ENCODE measurements at regions of chr14 and their contacts with region 1.

Region 1: GRCh38 chr14:104820669-104821228 is 19.8 kb downstream of the ZBTB42 start:
- DNase-seq: peak in 5 of 7 donors; percentile 43 to 80 (median 62)
- H3K4me3 ChIP-seq: no peak overlapping the region
- H3K27ac ChIP-seq: no peak overlapping the region
- H3K4me1 ChIP-seq: peaks cover 10 to 12% of the 10 kb centered on the region in 2 donors
- H3K27me3 ChIP-seq: no peaks in the 10 kb centered on the region
- CTCF ChIP-seq: peak; percentile 7 to 56 (median 31)
- POLR2A ChIP-seq: no peak

Region 2: GRCh38 chr14:104770851-104771272 is 49.9 kb before region 1 on chr14:
- intact Hi-C with region 1: loop called (anchors 5 kb)
- DNase-seq: no peak
- H3K4me3 ChIP-seq: no peak overlapping the region
- H3K27ac ChIP-seq: no peak overlapping the region
- H3K4me1 ChIP-seq: peaks cover 0 to 4% of the 10 kb centered on the region in 2 donors
- H3K27me3 ChIP-seq: no peaks in the 10 kb centered on the region
- CTCF ChIP-seq: peak; percentile 12 to 51 (median 42)
- POLR2A ChIP-seq: no peak

Measured in adrenal gland (tissue), 19 donors.